Endothelial cell of umbilical vein (primary cell): ENCODE measurements at regions of chr11 and their contacts with region 1.

Region 1: GRCh38 chr11:119262668-119263351 is 54.1 kb downstream of the MCAM start:
- DNase-seq: peak; percentile 71
- H3K4me3 ChIP-seq: no peak overlapping the region
- H3K27ac ChIP-seq: peak overlapping the region; percentile 73
- H3K4me1 ChIP-seq: peaks cover 24% of the 10 kb centered on the region
- H3K27me3 ChIP-seq: no peaks in the 10 kb centered on the region
- CTCF ChIP-seq: peak in 1 of 2 donors; percentile 4
- POLR2A ChIP-seq: no peak

Region 2: DNA sequence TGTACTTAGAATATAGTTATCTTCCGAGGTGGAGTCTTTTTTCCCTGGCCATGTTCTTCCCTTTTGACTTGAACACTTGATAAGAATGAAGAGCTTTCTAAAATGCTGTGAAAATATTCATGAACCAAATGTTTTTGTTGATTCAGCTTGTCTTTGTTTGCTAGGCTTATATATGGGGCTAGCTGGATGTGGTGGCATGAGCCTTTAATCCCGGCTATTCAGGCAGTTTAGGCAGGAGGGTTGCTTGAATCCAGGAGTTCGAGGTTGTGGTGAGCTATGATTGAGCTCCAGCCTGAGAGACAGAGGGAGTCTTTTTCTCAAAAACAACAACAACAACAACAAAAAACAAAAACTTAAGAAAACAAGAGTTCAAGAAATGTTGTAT is 33.5 kb before region 1 on chr11:
- CTCF ChIA-PET with region 1: interaction called, 5 read pairs
- POLR2A ChIA-PET with region 1: no interaction called
- dilution Hi-C with region 1: no loop called
- intact Hi-C with region 1: loop called (anchors 5 kb)
- DNase-seq: peak; percentile 29
- H3K4me3 ChIP-seq: no peak overlapping the region
- H3K27ac ChIP-seq: peak overlapping the region; percentile 57
- H3K4me1 ChIP-seq: peaks cover 17% of the 10 kb centered on the region
- H3K27me3 ChIP-seq: no peaks in the 10 kb centered on the region
- CTCF ChIP-seq: no peak
- POLR2A ChIP-seq: no peak

Region 3: GRCh38 chr11:119306373-119306890 is 43.6 kb after region 1 on chr11:
- CTCF ChIA-PET with region 1: interaction called, 4 read pairs
- POLR2A ChIA-PET with region 1: no interaction called
- dilution Hi-C with region 1: no loop called
- intact Hi-C with region 1: loop called (anchors 2 kb)
- DNase-seq: peak; percentile 39
- H3K4me3 ChIP-seq: no peak overlapping the region
- H3K27ac ChIP-seq: no peak overlapping the region
- H3K4me1 ChIP-seq: peaks cover 2% of the 10 kb centered on the region
- H3K27me3 ChIP-seq: no peaks in the 10 kb centered on the region
- CTCF ChIP-seq: no peak
- POLR2A ChIP-seq: no peak

Region 4: GRCh38 chr11:119432484-119433357 is 169.9 kb after region 1 on chr11:
- CTCF ChIA-PET with region 1: no interaction called
- POLR2A ChIA-PET with region 1: no interaction called
- dilution Hi-C with region 1: no loop called
- intact Hi-C with region 1: no loop called
- DNase-seq: no peak
- H3K4me3 ChIP-seq: no peak overlapping the region
- H3K27ac ChIP-seq: no peak overlapping the region
- H3K4me1 ChIP-seq: no peaks in the 10 kb centered on the region
- H3K27me3 ChIP-seq: peaks cover 4 to 7% of the 10 kb centered on the region in 2 experiments
- CTCF ChIP-seq: no peak
- POLR2A ChIP-seq: no peak